Pancreas (tissue), 10 donors: ENCODE measurements at regions of chr16 and their contacts with region 1.

Region 1: GRCh38 chr16:25126820-25127232 is 15.3 kb downstream of the LCMT1 start:
- DNase-seq: peak in 3 of 6 donors; percentile 37 to 61 (median 41)
- ATAC-seq: peak; percentile 91 to 96 (median 93)
- H3K4me3 ChIP-seq: no peak overlapping the region
- H3K27ac ChIP-seq: no peak overlapping the region
- H3K4me1 ChIP-seq: peaks cover 0 to 5% (median 0%) of the 10 kb centered on the region in 3 donors
- H3K27me3 ChIP-seq: no peaks in the 10 kb centered on the region
- CTCF ChIP-seq: peak in 3 of 4 donors; percentile 34 to 53 (median 38)

Region 2: GRCh38 chr16:25051406-25052150 is 75.2 kb before region 1 on chr16:
- intact Hi-C with region 1: loop called in 1 of 3 experiments (anchors 5 kb)
- DNase-seq: no peak
- ATAC-seq: peak in 3 of 4 donors; percentile 1 to 5 (median 5)
- H3K4me3 ChIP-seq: peak overlapping the region in 2 of 4 donors; percentile 15
- H3K27ac ChIP-seq: peak overlapping the region in 3 of 4 donors; percentile 0 to 55 (median 24)
- H3K4me1 ChIP-seq: peaks cover 0 to 20% (median 16%) of the 10 kb centered on the region in 3 donors
- H3K27me3 ChIP-seq: no peaks in the 10 kb centered on the region
- CTCF ChIP-seq: no peak

Region 3: GRCh38 chr16:25224731-25225319 is 98.0 kb after region 1 on chr16:
- intact Hi-C with region 1: loop called in 2 of 3 experiments (anchors 10 kb)
- DNase-seq: no peak
- ATAC-seq: peak in 2 of 4 donors; percentile 2 to 16
- H3K4me3 ChIP-seq: no peak overlapping the region
- H3K27ac ChIP-seq: peak overlapping the region in 1 of 4 donors; percentile 22
- H3K4me1 ChIP-seq: peaks cover 0 to 18% (median 0%) of the 10 kb centered on the region in 3 donors
- H3K27me3 ChIP-seq: no peaks in the 10 kb centered on the region
- CTCF ChIP-seq: no peak